Left lung (tissue), 14 donors: ENCODE measurements at regions of chr2 and their contacts with region 1.

Region 1: GRCh38 chr2:20015472-20016083 is 3.1 kb upstream of the MATN3 start:
- DNase-seq: peak in 2 of 4 donors; percentile 40 to 65
- ATAC-seq: peak; percentile 69
- H3K4me3 ChIP-seq: no peak overlapping the region
- H3K27ac ChIP-seq: no peak overlapping the region
- H3K4me1 ChIP-seq: peaks cover 8 to 15% of the 10 kb centered on the region in 2 donors
- H3K27me3 ChIP-seq: peaks cover 0 to 40% of the 10 kb centered on the region in 2 donors
- CTCF ChIP-seq: peak; percentile 44 to 61

Region 2: DNA sequence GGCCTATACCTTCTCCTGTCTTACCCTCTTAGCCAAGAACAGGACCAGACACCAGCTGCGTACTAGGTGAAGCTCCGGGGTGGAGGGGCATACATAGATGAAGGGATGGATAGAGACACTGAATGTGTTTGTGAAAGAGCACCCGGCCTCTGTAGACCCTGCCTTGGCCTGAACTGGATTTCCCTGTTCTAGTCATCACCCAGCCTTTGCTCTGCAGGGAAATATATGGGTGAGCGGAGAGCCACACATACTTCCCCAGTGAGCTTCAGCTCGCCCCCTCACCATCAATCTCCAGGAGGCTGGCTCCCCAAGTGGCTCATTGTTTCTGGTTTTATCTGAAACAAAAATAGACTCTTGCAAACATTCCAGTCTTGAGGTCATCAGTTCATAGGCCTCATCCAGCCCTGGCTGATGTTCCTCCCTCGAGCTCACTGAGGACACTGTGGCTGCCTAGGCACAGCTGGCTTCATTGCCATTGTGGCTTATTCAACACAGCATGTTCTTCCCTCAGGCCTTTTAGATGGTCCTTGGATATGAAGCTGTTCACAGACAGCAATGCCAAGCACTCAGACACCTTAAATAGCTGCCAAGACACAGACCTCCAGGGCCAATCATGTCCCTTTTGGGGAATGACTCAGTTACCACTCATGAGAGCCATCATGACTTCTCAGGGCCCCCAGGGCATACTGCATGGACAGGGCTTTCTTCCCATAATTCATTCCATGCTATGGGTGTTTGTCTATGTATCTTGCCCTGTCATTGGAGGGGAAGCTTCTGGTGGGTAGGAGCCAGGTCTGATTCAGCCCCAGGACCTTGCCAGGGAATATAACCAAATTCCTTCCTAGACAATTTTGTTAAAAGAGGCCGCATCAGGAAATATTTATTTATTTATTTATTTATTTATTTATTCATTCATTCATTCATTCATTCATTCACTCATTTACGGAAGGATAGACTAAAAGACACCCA is 196.2 kb before region 1 on chr2:
- intact Hi-C with region 1: no loop called
- DNase-seq: no peak
- ATAC-seq: no peak
- H3K4me3 ChIP-seq: no peak overlapping the region
- H3K27ac ChIP-seq: no peak overlapping the region
- H3K4me1 ChIP-seq: no peaks in the 10 kb centered on the region
- H3K27me3 ChIP-seq: no peaks in the 10 kb centered on the region
- CTCF ChIP-seq: no peak

Region 3: GRCh38 chr2:20093263-20094141 is 77.9 kb after region 1 on chr2:
- intact Hi-C with region 1: loop called in 1 of 2 experiments (anchors 5 kb)
- DNase-seq: peak in 3 of 4 donors; percentile 43 to 79 (median 53)
- ATAC-seq: peak; percentile 58
- H3K4me3 ChIP-seq: no peak overlapping the region
- H3K27ac ChIP-seq: no peak overlapping the region
- H3K4me1 ChIP-seq: peaks cover 0 to 2% of the 10 kb centered on the region in 2 donors
- H3K27me3 ChIP-seq: no peaks in the 10 kb centered on the region
- CTCF ChIP-seq: no peak